Kidney (tissue), 22 donors: ENCODE measurements at regions of chr15 and their contacts with region 1.

Region 1: GRCh38 chr15:100338971-100339444 is 2.8 kb downstream of the ADAMTS17 start:
- DNase-seq: peak in 4 of 5 donors; percentile 83 to 91 (median 88)
- H3K4me3 ChIP-seq: peak overlapping the region in 1 of 3 donors; percentile 38
- H3K27ac ChIP-seq: no peak overlapping the region
- H3K4me1 ChIP-seq: peaks cover 0 to 6% (median 1%) of the 10 kb centered on the region in 3 donors
- H3K27me3 ChIP-seq: peaks cover 7% of the 10 kb centered on the region
- CTCF ChIP-seq: peak; percentile 84

Region 2: DNA sequence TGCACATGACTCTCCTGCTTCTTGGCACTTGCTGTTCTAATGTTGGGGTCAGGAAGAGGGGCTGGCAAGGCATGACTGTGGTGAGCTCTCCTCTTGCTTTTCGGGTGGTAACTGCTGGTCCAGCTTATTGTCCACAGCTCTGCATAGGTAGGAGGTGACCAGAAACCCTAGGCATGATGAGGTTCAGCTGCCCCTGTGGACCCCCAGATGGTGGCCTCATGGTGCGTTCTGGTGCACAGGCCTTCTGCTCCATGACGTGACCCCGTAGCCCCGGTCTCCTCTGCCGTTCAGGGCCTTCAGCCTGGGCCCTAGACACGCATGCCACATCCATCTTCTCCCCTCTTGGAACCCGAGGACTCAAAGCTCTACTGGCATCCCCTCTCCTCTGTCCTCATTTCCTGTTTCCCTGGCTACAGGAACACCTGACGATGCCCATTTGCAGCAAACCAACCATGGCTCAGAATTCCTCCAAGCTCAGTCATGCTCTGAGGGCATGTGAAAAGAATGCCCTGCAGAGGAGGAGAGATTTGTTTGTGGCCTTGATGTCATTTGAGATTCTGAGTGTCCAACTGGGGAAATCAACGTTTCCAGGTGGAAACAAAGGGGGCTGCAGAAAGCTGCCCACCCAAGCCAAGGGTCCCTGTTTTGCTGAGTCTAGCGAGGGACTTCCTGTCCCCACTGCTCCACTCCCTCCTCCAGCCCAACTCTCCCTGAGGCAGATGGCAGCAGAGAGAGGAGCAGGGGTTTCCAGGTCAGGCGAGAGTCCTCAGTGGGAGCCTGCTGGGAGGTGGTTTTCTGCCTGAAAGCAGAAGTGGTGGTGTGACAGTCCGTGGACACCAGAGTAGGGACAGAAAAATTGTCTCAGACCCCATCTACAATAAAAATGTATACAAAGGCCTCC is 407.1 kb before region 1 on chr15:
- intact Hi-C with region 1: loop called (anchors 10 kb)
- DNase-seq: peak in 3 of 5 donors; percentile 24 to 66 (median 33)
- H3K4me3 ChIP-seq: no peak overlapping the region
- H3K27ac ChIP-seq: no peak overlapping the region
- H3K4me1 ChIP-seq: peaks cover 0 to 8% (median 6%) of the 10 kb centered on the region in 3 donors
- H3K27me3 ChIP-seq: peaks cover 2% of the 10 kb centered on the region
- CTCF ChIP-seq: no peak

Region 3: DNA sequence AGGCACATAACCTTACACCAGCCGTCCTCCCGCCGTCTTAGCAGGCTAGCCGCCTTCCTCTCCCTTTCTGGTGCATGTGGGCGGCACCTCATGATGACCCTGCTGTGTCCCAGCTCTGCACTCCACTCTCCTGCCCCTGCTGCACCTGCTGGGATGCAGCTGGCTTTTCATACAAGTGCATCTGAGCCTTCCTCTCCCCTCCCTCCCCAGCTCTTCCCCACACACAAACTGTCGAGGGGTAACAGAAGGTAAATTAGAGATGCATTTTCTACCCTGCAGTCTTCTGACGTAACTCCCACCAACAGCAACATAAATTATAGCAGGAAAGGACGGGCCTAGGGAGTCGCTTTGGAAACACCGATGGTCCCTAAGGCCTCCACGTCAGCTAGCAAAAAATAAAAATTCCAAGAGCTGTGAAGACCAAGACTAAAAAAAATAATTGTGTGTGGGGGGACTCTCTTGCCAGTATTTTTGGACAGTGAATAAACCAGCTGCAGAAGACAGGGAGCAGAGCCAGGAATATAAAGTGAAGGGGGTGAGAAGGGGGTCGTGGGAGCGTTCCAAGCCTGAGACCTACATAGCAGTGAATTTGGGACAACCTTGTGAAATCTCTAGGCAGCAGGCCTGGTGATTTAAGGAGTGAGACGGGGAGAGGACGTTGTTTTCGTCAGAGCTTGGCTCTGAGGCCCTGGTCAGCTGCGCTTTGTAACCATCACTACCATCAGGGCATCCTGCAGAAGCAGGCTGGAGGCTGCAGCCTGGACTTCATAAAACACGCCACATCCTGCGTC is 213.4 kb before region 1 on chr15:
- intact Hi-C with region 1: no loop called
- DNase-seq: peak; percentile 42 to 86 (median 67)
- H3K4me3 ChIP-seq: no peak overlapping the region
- H3K27ac ChIP-seq: no peak overlapping the region
- H3K4me1 ChIP-seq: no peaks in the 10 kb centered on the region
- H3K27me3 ChIP-seq: no peaks in the 10 kb centered on the region
- CTCF ChIP-seq: no peak

Region 4: GRCh38 chr15:100201376-100202280 is 137.4 kb before region 1 on chr15:
- intact Hi-C with region 1: no loop called
- DNase-seq: peak in 1 of 5 donors; percentile 60
- H3K4me3 ChIP-seq: no peak overlapping the region
- H3K27ac ChIP-seq: peak overlapping the region; percentile 65 to 67
- H3K4me1 ChIP-seq: peaks cover 0 to 13% (median 7%) of the 10 kb centered on the region in 3 donors
- H3K27me3 ChIP-seq: no peaks in the 10 kb centered on the region
- CTCF ChIP-seq: no peak

Region 5: GRCh38 chr15:100457201-100457600 is 118.2 kb after region 1 on chr15:
- intact Hi-C with region 1: no loop called
- DNase-seq: no peak
- H3K4me3 ChIP-seq: no peak overlapping the region
- H3K27ac ChIP-seq: no peak overlapping the region
- H3K4me1 ChIP-seq: no peaks in the 10 kb centered on the region
- H3K27me3 ChIP-seq: no peaks in the 10 kb centered on the region
- CTCF ChIP-seq: no peak